Activated B cell treated with CpG ODN at 0.5 μM for 24 hours (primary cell): ENCODE measurements at regions of chr14 and their contacts with region 1.

Region 1: GRCh38 chr14:35121887-35122695 is at the starts of genes PPP2R3C and PRORP:
- DNase-seq: peak; percentile 82
- ATAC-seq: peak; percentile 88
- H3K4me3 Mint-ChIP-seq: peak within 1 kb of the TSS; percentile 99
- H3K27ac Mint-ChIP-seq: peak within 1 kb of the TSS; percentile 100
- H3K4me1 Mint-ChIP-seq: peaks cover 49% of the 10 kb centered on the region
- H3K27me3 Mint-ChIP-seq: no peaks in the 10 kb centered on the region
- CTCF ChIP-seq: no peak
- total RNA-seq, gene PPP2R3C: 46.0 and 48.9 TPM in 2 replicates
- total RNA-seq, gene PRORP: 22.8 and 25.6 TPM in 2 replicates

Region 2: DNA sequence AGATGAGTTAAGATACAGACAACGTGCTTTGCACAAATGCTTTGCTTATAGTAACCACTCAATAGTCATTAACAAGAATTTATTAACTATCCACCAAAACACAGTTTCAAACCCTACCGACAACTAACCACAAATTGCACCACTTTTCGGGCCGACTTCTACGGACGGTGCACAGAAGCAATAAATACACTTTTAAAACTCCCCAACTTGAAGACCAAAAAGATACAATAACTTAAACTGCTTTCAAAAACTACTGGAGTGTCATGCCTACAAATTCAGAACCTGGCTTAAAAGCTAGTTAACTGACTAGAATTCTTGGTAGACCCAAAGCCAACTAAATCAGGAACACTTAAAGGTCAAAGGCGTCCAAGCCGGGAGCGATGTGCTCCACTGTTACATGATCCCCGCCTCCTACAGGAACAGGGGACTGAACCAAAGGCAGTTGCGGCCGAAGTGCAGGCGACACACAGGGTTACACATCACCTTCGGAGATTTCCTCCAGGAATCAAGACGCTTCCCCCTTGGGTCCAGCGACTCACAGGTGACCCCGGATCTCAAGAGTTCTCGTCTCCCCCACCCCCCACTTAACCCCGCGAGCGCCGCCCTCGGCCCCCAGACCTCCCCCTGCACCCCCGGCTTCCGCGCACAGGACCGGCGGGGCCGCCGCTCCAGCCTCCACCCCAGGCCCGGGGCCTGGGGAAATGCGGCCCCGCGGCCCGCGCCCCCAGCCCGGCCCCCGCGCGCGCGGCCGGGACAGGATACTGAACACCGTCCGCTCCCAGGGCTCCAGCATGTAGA is 660.6 kb before region 1 on chr14:
- CTCF ChIA-PET with region 1: no interaction called
- POLR2A ChIA-PET with region 1: no interaction called
- intact Hi-C with region 1: loop called (anchors 5 kb)
- DNase-seq: no peak
- ATAC-seq: no peak
- H3K4me3 Mint-ChIP-seq: peak overlapping the region; percentile 88
- H3K27ac Mint-ChIP-seq: peak overlapping the region; percentile 76
- H3K4me1 Mint-ChIP-seq: peaks cover 15% of the 10 kb centered on the region
- H3K27me3 Mint-ChIP-seq: no peaks in the 10 kb centered on the region
- CTCF ChIP-seq: no peak

Region 3: DNA sequence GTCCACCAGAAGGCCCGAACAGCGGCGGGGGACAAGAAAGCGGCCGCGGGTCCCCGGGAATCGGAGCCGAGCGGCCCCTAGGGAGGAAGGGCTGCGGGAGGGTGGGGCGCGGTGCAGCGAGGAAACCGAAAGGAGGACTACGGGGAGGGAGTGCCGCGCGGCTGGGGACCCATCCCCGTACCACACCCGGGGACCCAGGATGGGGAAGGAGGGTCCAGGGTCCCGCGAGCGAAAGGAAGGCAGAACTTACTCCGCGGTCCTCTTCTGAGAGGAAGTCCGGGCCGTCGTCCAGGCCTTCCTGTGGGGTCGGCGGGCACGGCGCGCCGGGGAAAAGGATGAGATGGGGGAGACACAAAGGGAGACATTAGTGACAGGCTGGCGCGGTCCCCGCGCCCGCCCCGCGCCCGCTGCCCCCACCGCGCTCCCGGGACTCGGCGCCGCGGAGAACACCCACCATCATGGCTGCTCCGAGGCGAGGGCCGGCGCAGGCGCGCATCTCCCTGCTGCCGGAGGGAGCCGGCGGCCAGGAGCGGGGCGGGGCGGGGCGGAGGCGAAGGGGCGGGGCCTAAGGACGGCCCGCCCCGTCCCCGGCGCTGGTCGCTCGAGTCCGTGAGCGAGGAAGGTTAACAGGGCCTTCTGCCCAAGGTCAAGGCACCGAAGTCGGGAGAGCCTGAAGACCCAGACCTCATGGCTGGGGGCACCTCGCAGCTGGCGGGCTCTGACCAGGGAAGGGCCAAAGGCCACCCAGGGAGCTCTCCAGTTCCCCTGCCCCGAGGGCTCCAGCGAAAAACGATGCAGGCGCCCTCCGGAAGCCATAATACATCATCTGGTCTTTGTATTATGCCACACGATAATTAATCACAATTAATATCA is 492.2 kb before region 1 on chr14 and contains the start of gene SNX6:
- CTCF ChIA-PET with region 1: no interaction called
- POLR2A ChIA-PET with region 1: no interaction called
- intact Hi-C with region 1: loop called (anchors 1 kb)
- DNase-seq: peak; percentile 77
- ATAC-seq: peak; percentile 98
- H3K4me3 Mint-ChIP-seq: peak within 1 kb of the TSS; percentile 97
- H3K27ac Mint-ChIP-seq: peak within 1 kb of the TSS; percentile 93
- H3K4me1 Mint-ChIP-seq: peaks cover 10% of the 10 kb centered on the region
- H3K27me3 Mint-ChIP-seq: peaks cover 3% of the 10 kb centered on the region
- CTCF ChIP-seq: no peak
- total RNA-seq, gene SNX6: 56.0 and 61.0 TPM in 2 replicates

Region 4: GRCh38 chr14:34875031-34875922 is 246.8 kb before region 1 on chr14 and contains the start of gene BAZ1A:
- CTCF ChIA-PET with region 1: no interaction called
- POLR2A ChIA-PET with region 1: interaction called, 5 read pairs
- intact Hi-C with region 1: loop called (anchors 1 kb)
- DNase-seq: peak; percentile 63
- ATAC-seq: peak; percentile 12
- H3K4me3 Mint-ChIP-seq: peak within 1 kb of the TSS; percentile 100
- H3K27ac Mint-ChIP-seq: peak within 1 kb of the TSS; percentile 99
- H3K4me1 Mint-ChIP-seq: peaks cover 35% of the 10 kb centered on the region
- H3K27me3 Mint-ChIP-seq: no peaks in the 10 kb centered on the region
- CTCF ChIP-seq: no peak
- total RNA-seq, gene BAZ1A: 45.3 and 55.9 TPM in 2 replicates

Region 5: GRCh38 chr14:35046048-35046741 is 75.9 kb before region 1 on chr14 and contains the start of gene FAM177A1:
- CTCF ChIA-PET with region 1: no interaction called
- POLR2A ChIA-PET with region 1: interaction called, 27 read pairs
- intact Hi-C with region 1: loop called (anchors 1 kb)
- DNase-seq: peak; percentile 93
- ATAC-seq: peak; percentile 94
- H3K4me3 Mint-ChIP-seq: peak within 1 kb of the TSS; percentile 96
- H3K27ac Mint-ChIP-seq: peak within 1 kb of the TSS; percentile 97
- H3K4me1 Mint-ChIP-seq: peaks cover 28% of the 10 kb centered on the region
- H3K27me3 Mint-ChIP-seq: no peaks in the 10 kb centered on the region
- CTCF ChIP-seq: no peak
- total RNA-seq, gene FAM177A1: 23.5 and 27.4 TPM in 2 replicates

Region 6: GRCh38 chr14:35205737-35206136 is 83.6 kb after region 1 on chr14:
- CTCF ChIA-PET with region 1: no interaction called
- POLR2A ChIA-PET with region 1: no interaction called
- intact Hi-C with region 1: no loop called
- DNase-seq: no peak
- ATAC-seq: no peak
- H3K4me3 Mint-ChIP-seq: no peak overlapping the region
- H3K27ac Mint-ChIP-seq: no peak overlapping the region
- H3K4me1 Mint-ChIP-seq: peaks cover 3% of the 10 kb centered on the region
- H3K27me3 Mint-ChIP-seq: no peaks in the 10 kb centered on the region
- CTCF ChIP-seq: no peak

Region 7: GRCh38 chr14:35222872-35223466 is 100.9 kb after region 1 on chr14:
- CTCF ChIA-PET with region 1: no interaction called
- POLR2A ChIA-PET with region 1: no interaction called
- intact Hi-C with region 1: no loop called
- DNase-seq: no peak
- ATAC-seq: no peak
- H3K4me3 Mint-ChIP-seq: no peak overlapping the region
- H3K27ac Mint-ChIP-seq: no peak overlapping the region
- H3K4me1 Mint-ChIP-seq: no peaks in the 10 kb centered on the region
- H3K27me3 Mint-ChIP-seq: no peaks in the 10 kb centered on the region
- CTCF ChIP-seq: no peak

Region 8: DNA sequence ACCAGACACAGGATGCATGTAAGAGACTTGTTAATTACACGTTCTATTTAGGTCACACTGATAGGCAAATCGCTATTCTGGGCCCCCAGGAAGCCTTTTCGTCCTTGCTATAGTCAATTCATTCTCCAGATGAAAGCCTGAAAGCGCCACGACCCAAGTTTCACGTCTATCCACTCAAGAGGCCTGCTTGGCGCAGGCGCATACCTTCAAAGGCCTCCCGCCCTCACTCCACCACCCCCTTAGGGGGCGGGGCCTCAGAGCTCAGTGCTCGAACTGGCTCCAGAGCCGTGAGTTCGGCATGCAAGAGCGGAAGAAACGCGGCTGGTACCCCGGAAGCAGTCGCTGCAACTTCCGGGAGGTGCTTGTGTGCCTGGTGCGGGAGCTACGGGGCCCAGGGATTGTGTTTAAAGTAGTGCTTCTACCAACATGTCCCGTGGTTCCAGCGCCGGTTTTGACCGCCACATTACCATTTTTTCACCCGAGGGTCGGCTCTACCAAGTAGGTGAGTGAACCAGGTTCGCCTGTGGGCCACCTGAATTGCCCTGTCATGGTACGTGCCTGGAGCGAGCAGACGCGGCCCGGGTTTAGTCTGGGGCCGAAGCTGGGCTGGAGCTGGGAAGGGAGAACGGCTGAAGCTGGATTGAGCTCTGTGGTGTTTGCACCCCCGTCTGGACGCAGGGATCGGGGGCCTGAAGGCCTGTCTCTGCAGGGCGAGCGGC is 170.1 kb after region 1 on chr14 and contains the start of gene PSMA6:
- CTCF ChIA-PET with region 1: no interaction called
- POLR2A ChIA-PET with region 1: interaction called, 14 read pairs
- intact Hi-C with region 1: loop called (anchors 1 kb)
- DNase-seq: peak; percentile 93
- ATAC-seq: peak; percentile 97
- H3K4me3 Mint-ChIP-seq: peak within 1 kb of the TSS; percentile 99
- H3K27ac Mint-ChIP-seq: peak within 1 kb of the TSS; percentile 96
- H3K4me1 Mint-ChIP-seq: peaks cover 61% of the 10 kb centered on the region
- H3K27me3 Mint-ChIP-seq: no peaks in the 10 kb centered on the region
- CTCF ChIP-seq: no peak
- total RNA-seq, gene PSMA6: 163 and 180 TPM in 2 replicates

Region 9: DNA sequence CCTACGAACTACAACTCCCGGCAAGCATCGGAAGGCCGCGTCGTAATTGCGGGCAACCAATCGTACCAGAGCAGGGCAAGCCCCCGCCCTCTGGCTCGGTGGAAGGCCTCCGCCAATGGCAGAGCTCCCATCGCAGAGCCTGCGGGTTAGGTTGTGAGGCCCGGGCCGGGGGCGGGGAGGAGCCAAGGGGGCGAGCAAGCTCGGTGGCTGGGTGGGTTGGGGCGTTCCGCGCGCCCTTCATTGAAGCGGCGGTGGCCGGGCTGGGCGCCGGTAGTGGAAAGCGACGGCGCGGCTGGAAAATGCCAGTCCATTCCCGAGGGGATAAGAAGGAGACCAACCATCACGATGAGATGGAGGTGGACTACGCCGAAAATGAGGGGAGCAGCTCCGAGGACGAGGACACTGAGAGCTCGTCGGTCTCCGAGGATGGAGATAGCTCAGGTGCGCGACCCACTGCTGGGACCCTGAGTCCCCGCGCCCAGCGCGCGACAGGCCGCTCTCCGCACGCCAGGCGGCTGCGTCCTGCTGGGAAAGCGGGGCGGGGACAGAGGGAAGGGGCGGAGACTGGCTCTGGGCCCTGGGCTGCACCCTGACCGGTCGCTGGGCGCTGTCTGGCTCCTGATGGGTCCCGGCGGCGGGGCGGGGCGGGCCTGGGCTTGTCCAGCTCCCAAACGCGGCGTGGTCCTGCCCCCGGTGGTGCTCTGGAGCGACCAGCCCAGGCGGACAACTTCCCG is 704.3 kb after region 1 on chr14 and contains the start of gene BRMS1L:
- CTCF ChIA-PET with region 1: no interaction called
- POLR2A ChIA-PET with region 1: interaction called, 4 read pairs
- intact Hi-C with region 1: loop called (anchors 1 kb)
- DNase-seq: peak; percentile 90
- ATAC-seq: peak; percentile 96
- H3K4me3 Mint-ChIP-seq: peak within 1 kb of the TSS; percentile 87
- H3K27ac Mint-ChIP-seq: peak within 1 kb of the TSS; percentile 92
- H3K4me1 Mint-ChIP-seq: peaks cover 19% of the 10 kb centered on the region
- H3K27me3 Mint-ChIP-seq: no peaks in the 10 kb centered on the region
- CTCF ChIP-seq: no peak
- total RNA-seq, gene BRMS1L: 3.7 and 4.4 TPM in 2 replicates

Region 10: DNA sequence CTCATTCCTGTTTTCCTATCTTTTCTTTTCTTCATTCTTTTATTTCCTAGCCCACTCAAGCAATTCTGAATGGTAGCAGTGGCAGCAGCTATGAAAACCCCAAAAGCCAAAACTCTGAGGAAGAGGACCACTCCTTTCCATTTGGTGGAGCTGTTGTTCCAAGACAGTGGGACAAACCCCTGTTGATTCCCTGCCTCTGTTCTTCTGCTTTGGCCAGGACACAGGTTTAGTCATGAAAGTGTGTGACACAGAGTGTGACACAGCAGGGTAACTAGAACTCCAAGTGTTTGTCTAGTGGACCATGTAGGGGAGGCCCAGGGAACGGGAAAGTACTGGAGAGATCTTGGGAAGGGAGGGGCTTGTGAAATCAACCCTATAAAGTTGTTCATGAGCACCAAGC is 983.3 kb after region 1 on chr14:
- CTCF ChIA-PET with region 1: no interaction called
- POLR2A ChIA-PET with region 1: no interaction called
- intact Hi-C with region 1: no loop called
- DNase-seq: no peak
- ATAC-seq: no peak
- H3K4me3 Mint-ChIP-seq: no peak overlapping the region
- H3K27ac Mint-ChIP-seq: no peak overlapping the region
- H3K4me1 Mint-ChIP-seq: no peaks in the 10 kb centered on the region
- H3K27me3 Mint-ChIP-seq: peaks cover 3% of the 10 kb centered on the region
- CTCF ChIP-seq: no peak